ENCODE measurements at regions of chr6 and their contacts with region 1.

Region 1: DNA sequence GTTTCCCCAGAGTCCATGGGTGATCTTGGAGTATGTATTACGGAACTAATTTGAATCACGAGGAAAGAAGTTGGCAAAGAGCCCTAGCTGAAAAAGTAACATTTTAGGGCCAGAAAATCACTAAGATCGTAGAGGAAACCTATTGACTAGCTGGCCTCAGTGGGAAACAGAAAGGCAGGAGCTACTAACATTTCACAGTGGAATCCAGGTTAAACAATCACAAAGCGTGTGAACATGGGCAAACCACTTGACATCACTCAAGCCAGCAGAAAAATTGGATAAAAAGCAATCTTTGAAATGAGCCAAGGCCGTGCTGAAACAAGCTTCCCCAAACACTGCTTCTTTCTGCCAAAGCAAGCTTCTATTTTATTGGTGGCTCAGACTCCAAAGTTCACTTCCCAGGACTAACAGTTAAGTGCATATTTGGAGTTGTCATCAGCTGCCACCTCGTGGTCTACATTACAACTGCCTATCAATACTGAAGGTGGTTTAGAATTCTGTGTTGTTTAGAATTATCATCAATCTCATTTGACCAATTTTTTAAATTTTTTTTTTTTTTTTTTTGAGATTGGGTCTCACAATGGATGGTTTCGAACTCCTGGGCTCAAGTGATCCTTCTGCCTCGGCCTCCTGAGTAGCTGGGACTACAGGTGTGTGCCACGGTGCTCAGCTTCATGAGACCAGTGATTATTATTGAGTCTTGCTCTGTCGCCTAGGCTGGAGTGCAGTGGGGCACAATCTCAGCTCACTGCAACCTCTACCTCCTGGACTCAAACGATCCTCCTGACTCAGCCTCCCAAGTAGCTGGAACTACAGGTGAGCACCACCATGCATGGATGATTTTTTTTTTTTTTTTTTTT is 10.6 kb downstream of the RPS10 start:
- DNase-seq: peak; percentile 72
- H3K4me3 Mint-ChIP-seq: no peak overlapping the region
- H3K27ac Mint-ChIP-seq: peak overlapping the region; percentile 62
- H3K4me1 Mint-ChIP-seq: peaks cover 43% of the 10 kb centered on the region
- H3K27me3 Mint-ChIP-seq: no peaks in the 10 kb centered on the region
- CTCF ChIP-seq: peak; percentile 85

Region 2: GRCh38 chr6:33958526-33959333 is 456.5 kb before region 1 on chr6:
- CTCF ChIA-PET with region 1: no interaction called
- intact Hi-C with region 1: no loop called
- DNase-seq: no peak
- H3K4me3 Mint-ChIP-seq: no peak overlapping the region
- H3K27ac Mint-ChIP-seq: no peak overlapping the region
- H3K4me1 Mint-ChIP-seq: no peaks in the 10 kb centered on the region
- H3K27me3 Mint-ChIP-seq: peaks cover 94% of the 10 kb centered on the region
- CTCF ChIP-seq: peak; percentile 52

Region 3: GRCh38 chr6:34015586-34015985 is 399.6 kb before region 1 on chr6:
- CTCF ChIA-PET with region 1: no interaction called
- intact Hi-C with region 1: no loop called
- DNase-seq: no peak
- H3K4me3 Mint-ChIP-seq: no peak overlapping the region
- H3K27ac Mint-ChIP-seq: no peak overlapping the region
- H3K4me1 Mint-ChIP-seq: no peaks in the 10 kb centered on the region
- H3K27me3 Mint-ChIP-seq: peaks cover 27% of the 10 kb centered on the region
- CTCF ChIP-seq: no peak

Region 4: DNA sequence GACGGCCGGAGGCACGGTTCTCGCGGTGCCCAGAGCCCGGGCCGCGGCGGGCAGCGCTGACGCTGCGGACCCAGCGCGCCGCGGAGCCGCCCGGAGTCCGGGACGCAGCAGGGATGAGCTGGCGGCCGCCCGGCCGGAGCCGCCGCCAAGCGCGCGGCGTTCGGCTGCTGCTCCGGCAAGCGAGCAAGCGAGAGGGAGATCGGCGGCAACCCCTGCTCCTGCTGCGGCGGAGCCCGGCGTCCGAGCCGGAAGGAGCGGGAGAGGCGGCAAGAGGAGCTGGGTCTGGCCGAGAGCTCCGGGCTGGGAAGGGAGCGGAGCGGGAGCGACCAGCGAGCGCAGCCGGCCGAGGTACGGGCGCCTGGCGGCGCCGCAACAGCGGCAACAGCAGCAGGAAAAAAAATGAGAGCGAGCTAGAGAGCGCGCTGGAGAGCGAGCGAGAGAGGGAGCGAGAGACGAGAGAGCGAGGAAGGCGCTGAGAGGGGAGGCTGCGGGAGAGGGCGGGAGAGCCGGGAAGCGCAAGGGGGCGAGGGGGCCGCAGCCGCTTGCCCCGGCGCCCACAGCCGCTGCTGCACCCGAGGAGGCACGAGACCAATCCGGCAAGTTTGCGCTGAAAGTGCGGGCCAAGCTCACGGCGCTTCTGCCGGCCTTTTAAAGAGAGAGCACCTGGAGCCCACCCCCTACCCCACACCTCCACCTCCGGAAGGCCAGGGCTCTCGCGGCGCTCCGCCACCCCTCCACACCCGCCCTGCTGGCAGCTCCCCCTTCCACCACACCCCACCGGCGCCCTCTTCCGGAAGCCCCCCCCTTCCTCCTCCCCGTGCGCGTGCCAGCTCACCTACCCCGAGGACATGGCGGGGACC is 269.8 kb before region 1 on chr6:
- CTCF ChIA-PET with region 1: no interaction called
- intact Hi-C with region 1: no loop called
- DNase-seq: peak; percentile 63
- H3K4me3 Mint-ChIP-seq: peak overlapping the region; percentile 78
- H3K27ac Mint-ChIP-seq: no peak overlapping the region
- H3K4me1 Mint-ChIP-seq: peaks cover 9% of the 10 kb centered on the region
- H3K27me3 Mint-ChIP-seq: peaks cover 100% of the 10 kb centered on the region
- CTCF ChIP-seq: no peak

Region 5: GRCh38 chr6:34196126-34196830 is 219.0 kb before region 1 on chr6:
- CTCF ChIA-PET with region 1: interaction called, 60 read pairs
- intact Hi-C with region 1: loop called (anchors 1 kb)
- DNase-seq: peak; percentile 96
- H3K4me3 Mint-ChIP-seq: peak overlapping the region; percentile 75
- H3K27ac Mint-ChIP-seq: no peak overlapping the region
- H3K4me1 Mint-ChIP-seq: peaks cover 18% of the 10 kb centered on the region
- H3K27me3 Mint-ChIP-seq: peaks cover 15% of the 10 kb centered on the region
- CTCF ChIP-seq: peak; percentile 99

Region 6: DNA sequence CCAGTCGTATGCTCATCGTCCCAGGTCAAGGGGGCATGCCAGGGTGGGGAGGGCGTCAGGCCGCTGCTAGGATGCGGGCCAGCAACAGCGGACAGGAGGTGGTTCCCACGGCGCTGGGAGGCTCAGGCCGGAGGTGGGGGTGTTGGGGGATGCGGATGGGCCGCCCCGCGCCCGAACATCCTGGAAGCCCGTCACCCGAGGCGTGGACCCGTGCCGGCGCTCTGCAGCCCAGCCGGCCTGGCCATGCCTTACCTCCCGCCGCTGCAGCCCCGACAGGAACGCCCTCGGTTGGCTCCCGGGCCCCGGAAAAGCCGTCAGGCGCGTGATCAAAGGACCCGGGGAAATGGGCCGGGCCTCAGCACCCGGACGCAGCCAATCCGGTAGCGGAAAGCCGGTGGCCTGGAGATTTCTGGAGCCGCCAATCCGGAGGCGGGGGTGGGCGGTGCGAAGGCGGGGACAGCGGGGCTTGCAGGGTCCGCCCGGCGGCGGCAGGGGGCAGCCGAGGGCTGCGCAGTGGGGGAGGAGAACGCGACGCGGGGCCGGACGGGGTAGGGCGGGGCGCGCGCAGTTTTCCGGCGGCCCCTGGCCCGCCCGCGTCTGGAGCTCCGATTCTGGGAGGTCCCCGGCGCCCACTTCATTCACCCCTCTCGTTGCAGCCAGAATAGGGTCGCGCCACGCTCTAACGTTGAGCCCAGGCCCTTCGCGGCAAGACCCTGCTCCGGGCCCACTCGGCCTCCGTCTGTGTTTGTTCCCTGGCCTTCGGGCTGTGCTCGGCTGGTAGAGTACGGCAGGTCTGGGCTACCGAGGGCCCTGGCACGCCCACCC is 166.3 kb before region 1 on chr6 and contains the start of gene SMIM29:
- CTCF ChIA-PET with region 1: interaction called, 107 read pairs
- intact Hi-C with region 1: loop called (anchors 1 kb)
- DNase-seq: peak; percentile 100
- H3K4me3 Mint-ChIP-seq: peak within 1 kb of the TSS; percentile 81
- H3K27ac Mint-ChIP-seq: peak within 1 kb of the TSS; percentile 97
- H3K4me1 Mint-ChIP-seq: peaks cover 55% of the 10 kb centered on the region
- H3K27me3 Mint-ChIP-seq: no peaks in the 10 kb centered on the region
- CTCF ChIP-seq: peak; percentile 99
- total RNA-seq, gene SMIM29: 59.2 and 68.6 TPM in 2 replicates

Region 7: GRCh38 chr6:34392497-34393190 is 22.6 kb before region 1 on chr6 and contains the start of gene NUDT3:
- CTCF ChIA-PET with region 1: interaction called, 14 read pairs
- intact Hi-C with region 1: no loop called
- DNase-seq: peak; percentile 98
- H3K4me3 Mint-ChIP-seq: no peak within 1 kb of the TSS
- H3K27ac Mint-ChIP-seq: peak within 1 kb of the TSS; percentile 5
- H3K4me1 Mint-ChIP-seq: peaks cover 9% of the 10 kb centered on the region
- H3K27me3 Mint-ChIP-seq: no peaks in the 10 kb centered on the region
- CTCF ChIP-seq: peak; percentile 94
- total RNA-seq, gene NUDT3: 43.9 and 48.4 TPM in 2 replicates

Region 8: DNA sequence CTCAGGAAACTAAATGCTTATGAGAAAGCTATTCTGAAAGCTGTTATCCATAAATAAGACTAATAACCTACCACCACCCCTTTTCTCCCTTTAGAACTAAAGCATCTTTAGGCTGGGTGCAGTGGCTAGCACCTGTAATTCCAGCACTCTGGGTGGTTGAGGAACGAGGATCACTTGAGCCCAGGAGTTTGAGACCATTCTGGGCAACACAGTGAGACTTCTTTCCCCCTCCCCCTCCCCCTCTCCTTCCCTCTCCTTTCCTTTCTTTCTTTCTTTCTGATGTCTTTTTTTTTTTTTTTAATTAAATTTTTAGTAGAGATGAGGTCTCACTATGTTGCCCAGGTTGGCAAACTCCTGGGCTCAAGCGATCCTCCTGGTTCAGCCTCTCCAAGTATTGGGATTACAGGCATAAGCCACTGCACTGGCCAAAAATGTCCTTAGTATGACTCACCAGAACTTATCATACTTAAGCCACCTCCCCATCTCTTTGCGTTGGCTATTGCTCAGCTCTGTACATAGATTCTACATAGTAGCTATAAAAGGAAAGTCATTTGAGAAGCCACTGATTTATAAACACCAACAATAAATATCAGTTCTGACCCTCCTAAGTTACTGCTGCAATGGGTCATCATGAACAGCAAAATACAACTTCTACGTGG is 195.7 kb after region 1 on chr6:
- CTCF ChIA-PET with region 1: interaction called, 11 read pairs
- intact Hi-C with region 1: no loop called
- DNase-seq: peak; percentile 60
- H3K4me3 Mint-ChIP-seq: no peak overlapping the region
- H3K27ac Mint-ChIP-seq: peak overlapping the region; percentile 91
- H3K4me1 Mint-ChIP-seq: peaks cover 31% of the 10 kb centered on the region
- H3K27me3 Mint-ChIP-seq: no peaks in the 10 kb centered on the region
- CTCF ChIP-seq: no peak

Measured in Calu3 (cell line).